ENCODE measurements at regions of chr19 and their contacts with region 1.

Region 1: DNA sequence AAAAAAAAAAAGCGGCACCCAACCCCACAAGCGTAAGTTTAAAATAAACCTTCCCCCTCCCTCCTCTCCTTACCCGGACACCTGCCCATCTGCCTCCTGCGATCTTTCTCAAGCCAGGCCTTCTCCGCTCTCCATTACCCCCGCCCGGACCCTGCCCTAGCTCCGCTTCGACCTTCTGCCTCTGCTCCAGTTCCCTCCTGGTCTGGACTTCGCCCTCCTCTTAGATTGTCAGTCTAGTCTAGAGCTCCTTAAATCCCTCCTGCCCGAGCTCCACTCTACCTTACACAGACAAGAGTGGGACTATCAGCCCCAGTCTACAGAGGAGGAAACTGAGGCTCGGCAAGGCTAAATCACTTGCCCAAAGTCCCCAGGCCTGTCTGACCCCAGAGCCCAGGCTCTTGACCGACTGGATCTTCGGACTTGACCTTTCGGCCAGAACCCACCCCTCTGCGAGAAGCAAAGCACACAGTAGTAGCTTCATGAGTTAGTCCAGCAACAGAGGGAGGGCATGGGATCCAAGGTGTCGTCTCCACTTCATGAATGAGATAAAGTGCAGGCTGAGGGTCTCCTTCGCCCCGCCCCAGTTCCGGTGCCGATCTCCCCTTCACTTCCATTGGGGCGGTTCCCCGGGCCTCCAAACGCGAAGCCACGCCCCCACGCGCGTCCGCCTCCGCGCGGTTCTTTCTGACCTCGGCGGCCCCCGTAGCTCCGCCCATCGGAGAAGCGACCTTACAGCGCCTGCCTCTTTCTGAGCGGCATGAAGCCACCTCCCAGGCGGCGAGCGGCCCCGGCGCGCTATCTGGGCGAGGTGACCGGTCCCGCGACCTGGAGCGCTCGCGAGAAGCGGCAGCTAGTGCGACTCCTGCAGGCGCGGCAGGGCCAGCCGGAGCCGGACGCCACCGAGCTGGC is at the start of gene SNAPC2:
- DNase-seq: peak; percentile 96
- H3K4me3 Mint-ChIP-seq: peak within 1 kb of the TSS; percentile 82
- H3K27ac Mint-ChIP-seq: peak within 1 kb of the TSS; percentile 89
- H3K4me1 Mint-ChIP-seq: peaks cover 15% of the 10 kb centered on the region
- H3K27me3 Mint-ChIP-seq: peaks cover 26% of the 10 kb centered on the region
- total RNA-seq, gene SNAPC2: 18.4 and 19.5 TPM in 2 replicates

Region 2: GRCh38 chr19:7861955-7862951 is 57.6 kb before region 1 on chr19:
- intact Hi-C with region 1: loop called (anchors 2 kb)
- DNase-seq: peak; percentile 58
- H3K4me3 Mint-ChIP-seq: peak overlapping the region; percentile 26
- H3K27ac Mint-ChIP-seq: no peak overlapping the region
- H3K4me1 Mint-ChIP-seq: peaks cover 7% of the 10 kb centered on the region
- H3K27me3 Mint-ChIP-seq: peaks cover 25% of the 10 kb centered on the region

Region 3: DNA sequence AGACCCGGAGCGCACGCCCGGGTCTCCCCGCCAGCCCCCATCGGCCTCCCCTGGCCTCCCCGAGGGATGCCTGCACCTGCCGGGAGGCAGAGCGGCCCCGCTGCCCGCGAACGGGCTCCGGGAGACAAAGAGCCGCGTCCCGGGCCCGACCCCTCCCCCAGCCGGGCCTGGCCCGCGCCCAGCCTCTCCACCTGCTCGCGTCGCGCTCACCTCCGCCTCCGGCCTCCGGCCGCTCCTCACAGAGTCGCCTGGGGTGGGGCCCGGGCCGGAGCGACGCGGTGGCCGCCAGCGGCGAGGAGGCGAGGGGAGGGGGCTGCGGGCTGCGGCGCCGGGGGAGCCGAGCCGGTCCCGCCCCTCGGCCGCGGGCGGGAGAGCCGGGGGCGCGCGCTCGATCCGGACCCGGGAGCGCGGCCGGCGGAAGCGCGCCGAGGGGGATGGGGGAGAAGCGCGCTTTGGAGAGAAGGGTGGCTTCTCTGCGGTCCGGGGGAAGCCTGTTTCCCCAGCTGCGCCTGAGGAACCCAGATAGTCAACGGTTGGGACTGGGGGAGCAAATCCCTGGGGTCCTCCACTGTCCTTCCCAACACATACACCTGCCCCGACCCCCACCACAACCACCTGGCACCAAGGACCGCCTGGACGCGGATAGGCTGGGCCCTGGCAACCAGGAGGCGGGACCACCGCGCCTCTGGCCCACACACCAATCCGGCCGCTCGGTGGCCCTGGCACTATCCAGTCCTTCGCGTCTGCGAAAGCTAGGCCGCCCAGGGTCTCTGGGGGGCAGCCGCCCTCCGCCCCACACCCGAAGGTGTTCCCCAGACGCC is 45.6 kb before region 1 on chr19 and contains the start of gene PRR36:
- intact Hi-C with region 1: no loop called
- DNase-seq: no peak
- H3K4me3 Mint-ChIP-seq: peak within 1 kb of the TSS; percentile 63
- H3K27ac Mint-ChIP-seq: no peak within 1 kb of the TSS
- H3K4me1 Mint-ChIP-seq: peaks cover 14% of the 10 kb centered on the region
- H3K27me3 Mint-ChIP-seq: peaks cover 38% of the 10 kb centered on the region
- total RNA-seq, gene PRR36: 0.05 TPM in 1 of 2 replicates, not detected in the other

Region 4: GRCh38 chr19:7903244-7904073 is 16.4 kb before region 1 on chr19 and contains the start of gene MAP2K7:
- intact Hi-C with region 1: loop called (anchors 1 kb)
- DNase-seq: peak; percentile 100
- H3K4me3 Mint-ChIP-seq: peak within 1 kb of the TSS; percentile 88
- H3K27ac Mint-ChIP-seq: peak within 1 kb of the TSS; percentile 91
- H3K4me1 Mint-ChIP-seq: peaks cover 22% of the 10 kb centered on the region
- H3K27me3 Mint-ChIP-seq: no peaks in the 10 kb centered on the region
- total RNA-seq, gene MAP2K7: 43.0 and 44.6 TPM in 2 replicates

Region 5: GRCh38 chr19:7943444-7944176 is 23.7 kb after region 1 on chr19 and contains the start of gene TIMM44:
- intact Hi-C with region 1: loop called (anchors 1 kb)
- DNase-seq: peak; percentile 99
- H3K4me3 Mint-ChIP-seq: peak within 1 kb of the TSS; percentile 84
- H3K27ac Mint-ChIP-seq: peak within 1 kb of the TSS; percentile 93
- H3K4me1 Mint-ChIP-seq: peaks cover 15% of the 10 kb centered on the region
- H3K27me3 Mint-ChIP-seq: no peaks in the 10 kb centered on the region
- total RNA-seq, gene TIMM44: 79.2 and 90.2 TPM in 2 replicates

Measured in activated T-helper 2 cell treated with anti-CD3 and anti-CD28 coated beads, Interferon-gamma antibody, Interleukin-2, Interleukin-4, amounts not matched to agents 10 μg/mL and 5 μg/mL and 100 μg/mL, durations not matched to agents 14 hours and 24 hours and 36 hours (primary cell).